GM12878 (cell line): ENCODE measurements at regions of chr1 and their contacts with region 1.

Region 1: GRCh38 chr1:18282851-18283600 is 175.4 kb downstream of the IGSF21 start:
- DNase-seq: peak; percentile 34
- ATAC-seq: peak; percentile 65
- H3K4me3 ChIP-seq: 0 out of 2 replicates have a peak overlapping the region, but pooled peaks have one; percentile 13
- H3K27ac ChIP-seq: peak overlapping the region; percentile 72
- H3K4me1 ChIP-seq: peaks cover 41% of the 10 kb centered on the region
- H3K27me3 ChIP-seq: no peaks in the 10 kb centered on the region
- CTCF ChIP-seq: no peak
- EP300 ChIP-seq: no peak
- POLR2A ChIP-seq: no peak
- RAD21 ChIP-seq: no peak

Region 2: DNA sequence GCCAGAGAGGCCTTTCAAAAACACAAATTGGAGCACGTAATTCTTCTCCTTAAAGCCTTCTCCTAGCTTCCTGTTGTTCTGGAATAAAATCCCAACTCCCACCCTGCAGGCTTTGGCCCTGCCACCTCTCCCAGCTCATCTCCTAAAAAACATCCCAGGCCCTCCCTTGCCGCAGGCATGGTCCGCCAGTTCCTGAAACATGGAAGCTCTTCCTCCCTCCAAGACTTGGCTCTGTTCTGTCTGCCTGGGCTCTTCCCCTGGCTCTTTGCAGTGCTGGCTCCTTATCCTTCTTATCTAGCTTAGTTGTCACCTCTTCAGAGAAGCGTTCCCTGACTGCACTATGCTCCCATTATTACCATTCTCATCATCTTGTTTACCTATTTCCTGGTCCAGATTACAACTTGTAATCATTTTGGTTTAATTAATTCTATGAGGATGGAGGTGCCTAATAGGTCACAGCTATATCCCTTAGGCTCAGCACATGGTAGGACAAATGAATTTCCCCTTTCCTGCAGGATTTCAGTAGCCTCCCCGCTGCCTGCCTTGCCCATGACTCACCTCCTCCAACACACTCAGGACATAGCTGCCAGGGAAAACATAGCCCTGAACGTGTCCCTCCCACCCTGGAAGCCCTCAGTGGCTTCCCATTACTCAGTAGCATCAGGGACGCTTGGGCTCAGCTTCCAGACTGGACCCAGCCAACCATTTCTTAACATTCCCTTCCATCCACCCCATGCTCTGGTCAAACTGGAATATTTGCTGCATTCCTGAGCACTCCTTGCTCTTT is 191.2 kb before region 1 on chr1:
- CTCF ChIA-PET with region 1: no interaction called
- POLR2A ChIA-PET with region 1: no interaction called
- RAD21 ChIA-PET with region 1: no interaction called
- SMC1A ChIA-PET with region 1: no interaction called
- in situ Hi-C with region 1: no loop called
- intact Hi-C with region 1: no loop called
- DNase-seq: no peak
- ATAC-seq: no peak
- H3K4me3 ChIP-seq: no peak overlapping the region
- H3K27ac ChIP-seq: no peak overlapping the region
- H3K4me1 ChIP-seq: no peaks in the 10 kb centered on the region
- H3K27me3 ChIP-seq: peaks cover 0 to 2% of the 10 kb centered on the region in 2 experiments; a peak in 3 of 4 replicates
- CTCF ChIP-seq: no peak
- EP300 ChIP-seq: no peak
- POLR2A ChIP-seq: no peak
- RAD21 ChIP-seq: no peak

Region 3: GRCh38 chr1:18309552-18310155 is 26.6 kb after region 1 on chr1:
- CTCF ChIA-PET with region 1: no interaction called
- POLR2A ChIA-PET with region 1: no interaction called
- RAD21 ChIA-PET with region 1: no interaction called
- SMC1A ChIA-PET with region 1: no interaction called
- in situ Hi-C with region 1: no loop called
- intact Hi-C with region 1: no loop called
- DNase-seq: no peak
- ATAC-seq: no peak
- H3K4me3 ChIP-seq: no peak overlapping the region
- H3K27ac ChIP-seq: no peak overlapping the region
- H3K4me1 ChIP-seq: no peaks in the 10 kb centered on the region
- H3K27me3 ChIP-seq: no peaks in the 10 kb centered on the region; a peak in 2 of 4 replicates
- CTCF ChIP-seq: no peak
- EP300 ChIP-seq: no peak
- POLR2A ChIP-seq: no peak
- RAD21 ChIP-seq: no peak

Region 4: GRCh38 chr1:18347559-18347958 is 64.5 kb after region 1 on chr1:
- CTCF ChIA-PET with region 1: no interaction called
- POLR2A ChIA-PET with region 1: interaction called, 3 read pairs
- RAD21 ChIA-PET with region 1: no interaction called
- SMC1A ChIA-PET with region 1: interaction called, 4 read pairs
- in situ Hi-C with region 1: no loop called
- intact Hi-C with region 1: loop called (anchors 2 kb)
- DNase-seq: no peak
- ATAC-seq: peak; percentile 85
- H3K4me3 ChIP-seq: no peak overlapping the region
- H3K27ac ChIP-seq: no peak overlapping the region
- H3K4me1 ChIP-seq: peaks cover 13% of the 10 kb centered on the region
- H3K27me3 ChIP-seq: no peaks in the 10 kb centered on the region
- CTCF ChIP-seq: no peak
- EP300 ChIP-seq: no peak
- POLR2A ChIP-seq: no peak
- RAD21 ChIP-seq: no peak